ENCODE measurements at regions of chr12 and their contacts with region 1.

Region 1: GRCh38 chr12:113196996-113197395 is 11.5 kb downstream of the RITA1 start:
- DNase-seq: peak; percentile 88
- ATAC-seq: peak; percentile 84
- H3K4me3 ChIP-seq: no peak overlapping the region
- H3K27ac ChIP-seq: peak overlapping the region; percentile 25
- H3K4me1 ChIP-seq: peaks cover 14% of the 10 kb centered on the region
- H3K27me3 ChIP-seq: no peaks in the 10 kb centered on the region
- CTCF ChIP-seq: peak; percentile 87

Region 2: DNA sequence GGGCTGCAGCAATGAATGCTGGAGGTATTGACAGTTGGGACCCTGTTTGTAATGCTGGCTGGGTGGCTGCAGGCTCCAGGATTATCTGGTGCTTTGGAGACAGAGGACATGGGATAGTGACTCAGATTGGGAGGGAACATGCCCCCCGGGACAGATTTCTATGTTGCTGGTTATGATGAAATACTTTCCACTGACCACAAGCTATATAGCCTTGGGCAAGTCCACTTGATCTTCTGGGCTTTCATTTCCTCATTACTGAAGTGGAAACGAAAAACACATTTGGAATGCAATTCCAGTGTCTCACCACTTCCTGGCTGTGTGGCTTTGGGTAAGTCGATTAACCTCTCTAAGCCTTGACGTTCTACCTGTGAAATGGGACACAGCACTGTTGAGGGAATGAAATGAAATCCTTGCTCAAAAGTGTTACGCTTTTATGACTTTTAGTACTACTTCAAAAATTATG is 18.0 kb after region 1 on chr12:
- CTCF ChIA-PET with region 1: no interaction called
- POLR2A ChIA-PET with region 1: no interaction called
- intact Hi-C with region 1: loop called (anchors 1 kb)
- DNase-seq: peak; percentile 99
- ATAC-seq: peak; percentile 93
- H3K4me3 ChIP-seq: no peak overlapping the region
- H3K27ac ChIP-seq: peak overlapping the region; percentile 83
- H3K4me1 ChIP-seq: peaks cover 18% of the 10 kb centered on the region
- H3K27me3 ChIP-seq: no peaks in the 10 kb centered on the region
- CTCF ChIP-seq: no peak

Region 3: GRCh38 chr12:113241191-113242025 is 44.4 kb after region 1 on chr12:
- CTCF ChIA-PET with region 1: interaction called, 8 read pairs
- POLR2A ChIA-PET with region 1: interaction called, 3 read pairs
- intact Hi-C with region 1: loop called (anchors 1 kb)
- DNase-seq: peak; percentile 97
- ATAC-seq: peak; percentile 61
- H3K4me3 ChIP-seq: peak overlapping the region; percentile 37; the same call in 1 of the 2 replicates
- H3K27ac ChIP-seq: peak overlapping the region; percentile 96
- H3K4me1 ChIP-seq: peaks cover 64% of the 10 kb centered on the region
- H3K27me3 ChIP-seq: no peaks in the 10 kb centered on the region
- CTCF ChIP-seq: no peak

Region 4: GRCh38 chr12:113299619-113300237 is 102.7 kb after region 1 on chr12:
- CTCF ChIA-PET with region 1: interaction called, 3 read pairs
- POLR2A ChIA-PET with region 1: no interaction called
- intact Hi-C with region 1: loop called (anchors 5 kb)
- DNase-seq: peak; percentile 94
- ATAC-seq: peak; percentile 91
- H3K4me3 ChIP-seq: peak overlapping the region; percentile 10; the same call in 1 of the 2 replicates
- H3K27ac ChIP-seq: peak overlapping the region; percentile 83
- H3K4me1 ChIP-seq: peaks cover 17% of the 10 kb centered on the region
- H3K27me3 ChIP-seq: no peaks in the 10 kb centered on the region
- CTCF ChIP-seq: no peak

Region 5: GRCh38 chr12:113358381-113359132 is 161.6 kb after region 1 on chr12 and contains the start of gene PLBD2:
- CTCF ChIA-PET with region 1: interaction called, 7 read pairs
- POLR2A ChIA-PET with region 1: no interaction called
- intact Hi-C with region 1: loop called (anchors 5 kb)
- DNase-seq: peak; percentile 93
- ATAC-seq: peak; percentile 91
- H3K4me3 ChIP-seq: peak within 1 kb of the TSS; percentile 86
- H3K27ac ChIP-seq: peak within 1 kb of the TSS; percentile 13; the same call in 1 of the 2 replicates
- H3K4me1 ChIP-seq: peaks cover 12% of the 10 kb centered on the region
- H3K27me3 ChIP-seq: no peaks in the 10 kb centered on the region
- CTCF ChIP-seq: no peak
- total RNA-seq, gene PLBD2: 18.8 and 38.1 TPM in 2 replicates

Measured in PC-3 (cell line).